Psoas muscle (tissue), 8 donors: ENCODE measurements at regions of chr7 and their contacts with region 1.

Region 1: GRCh38 chr7:51085034-51085692 is 231.4 kb downstream of the COBL start:
- DNase-seq: no peak
- ATAC-seq: no peak
- H3K4me3 ChIP-seq: no peak overlapping the region
- H3K27ac ChIP-seq: no peak overlapping the region
- H3K4me1 ChIP-seq: no peaks in the 10 kb centered on the region
- H3K27me3 ChIP-seq: no peaks in the 10 kb centered on the region
- CTCF ChIP-seq: no peak

Region 2: GRCh38 chr7:51129527-51130472 is 44.6 kb after region 1 on chr7:
- intact Hi-C with region 1: loop called in 1 of 2 experiments (anchors 5 kb)
- DNase-seq: no peak
- ATAC-seq: no peak
- H3K4me3 ChIP-seq: no peak overlapping the region
- H3K27ac ChIP-seq: no peak overlapping the region
- H3K4me1 ChIP-seq: no peaks in the 10 kb centered on the region
- H3K27me3 ChIP-seq: no peaks in the 10 kb centered on the region
- CTCF ChIP-seq: no peak